ENCODE measurements at regions of chr14 and their contacts with region 1.

Region 1: GRCh38 chr14:77457522-77458290 is at the starts of genes AHSA1 and VIPAS39:
- DNase-seq: peak; percentile 92
- H3K4me3 ChIP-seq: peak within 1 kb of the TSS; percentile 83 to 99 (median 88)
- H3K27ac ChIP-seq: peak within 1 kb of the TSS; percentile 88 to 96 (median 94)
- H3K4me1 ChIP-seq: peaks cover 0 to 38% (median 19%) of the 10 kb centered on the region in 3 donors
- H3K27me3 ChIP-seq: no peaks in the 10 kb centered on the region
- CTCF ChIP-seq: no peak
- POLR2A ChIP-seq: peak in 3 of 4 donors; percentile 54 to 74 (median 66)
- total RNA-seq, gene AHSA1: 98.6 to 166 (median 120) TPM
- total RNA-seq, gene VIPAS39: 13.2 to 15.3 (median 13.8) TPM

Region 2: DNA sequence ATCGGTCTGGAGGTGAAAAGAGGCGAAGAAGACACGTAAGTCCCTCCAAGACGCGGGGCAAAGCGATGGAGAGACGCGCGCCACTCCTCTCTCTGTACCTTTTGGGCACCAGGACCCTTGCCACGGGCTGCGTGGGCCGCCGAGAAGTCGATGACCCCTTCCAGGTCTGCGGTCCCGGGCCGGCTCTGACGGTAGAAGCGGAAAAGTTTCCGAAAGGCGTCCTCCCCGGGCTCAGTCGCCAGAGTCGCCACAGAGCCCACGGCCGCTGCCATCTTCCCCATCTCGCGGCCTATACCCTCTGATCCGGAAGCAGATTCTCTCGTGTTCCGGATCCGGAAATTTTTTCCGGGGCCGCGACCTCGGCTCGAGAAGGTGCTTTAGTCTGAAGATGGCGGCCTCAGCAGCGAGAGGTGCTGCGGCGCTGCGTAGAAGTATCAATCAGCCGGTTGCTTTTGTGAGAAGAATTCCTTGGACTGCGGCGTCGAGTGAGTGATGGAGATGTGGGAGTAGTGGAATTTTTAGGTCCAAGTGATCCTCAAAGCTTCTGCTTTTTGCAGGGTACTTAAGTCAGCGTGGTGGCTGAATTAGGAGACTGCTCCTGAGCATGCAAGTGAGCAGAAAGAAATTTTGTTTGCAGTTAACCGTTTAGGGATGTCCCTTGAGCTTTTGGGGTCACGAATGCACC is 250.2 kb after region 1 on chr14 and contains the starts of genes ALKBH1 and SLIRP:
- intact Hi-C with region 1: loop called (anchors 5 kb)
- DNase-seq: peak; percentile 25
- H3K4me3 ChIP-seq: peak within 1 kb of the TSS; percentile 78 to 92 (median 84)
- H3K27ac ChIP-seq: peak within 1 kb of the TSS; percentile 48 to 81 (median 70)
- H3K4me1 ChIP-seq: peaks cover 21 to 44% (median 25%) of the 10 kb centered on the region in 3 donors
- H3K27me3 ChIP-seq: no peaks in the 10 kb centered on the region
- CTCF ChIP-seq: peak in 1 of 6 experiments; percentile 20
- POLR2A ChIP-seq: peak in 2 of 4 donors; percentile 22 to 67
- total RNA-seq, gene ALKBH1: 4.2 to 8.8 (median 6.7) TPM
- total RNA-seq, gene SLIRP: 125 to 487 (median 290) TPM

Measured in esophagus squamous epithelium (tissue), 5 donors.